ENCODE measurements at regions of chr2 and their contacts with region 1.

Region 1: DNA sequence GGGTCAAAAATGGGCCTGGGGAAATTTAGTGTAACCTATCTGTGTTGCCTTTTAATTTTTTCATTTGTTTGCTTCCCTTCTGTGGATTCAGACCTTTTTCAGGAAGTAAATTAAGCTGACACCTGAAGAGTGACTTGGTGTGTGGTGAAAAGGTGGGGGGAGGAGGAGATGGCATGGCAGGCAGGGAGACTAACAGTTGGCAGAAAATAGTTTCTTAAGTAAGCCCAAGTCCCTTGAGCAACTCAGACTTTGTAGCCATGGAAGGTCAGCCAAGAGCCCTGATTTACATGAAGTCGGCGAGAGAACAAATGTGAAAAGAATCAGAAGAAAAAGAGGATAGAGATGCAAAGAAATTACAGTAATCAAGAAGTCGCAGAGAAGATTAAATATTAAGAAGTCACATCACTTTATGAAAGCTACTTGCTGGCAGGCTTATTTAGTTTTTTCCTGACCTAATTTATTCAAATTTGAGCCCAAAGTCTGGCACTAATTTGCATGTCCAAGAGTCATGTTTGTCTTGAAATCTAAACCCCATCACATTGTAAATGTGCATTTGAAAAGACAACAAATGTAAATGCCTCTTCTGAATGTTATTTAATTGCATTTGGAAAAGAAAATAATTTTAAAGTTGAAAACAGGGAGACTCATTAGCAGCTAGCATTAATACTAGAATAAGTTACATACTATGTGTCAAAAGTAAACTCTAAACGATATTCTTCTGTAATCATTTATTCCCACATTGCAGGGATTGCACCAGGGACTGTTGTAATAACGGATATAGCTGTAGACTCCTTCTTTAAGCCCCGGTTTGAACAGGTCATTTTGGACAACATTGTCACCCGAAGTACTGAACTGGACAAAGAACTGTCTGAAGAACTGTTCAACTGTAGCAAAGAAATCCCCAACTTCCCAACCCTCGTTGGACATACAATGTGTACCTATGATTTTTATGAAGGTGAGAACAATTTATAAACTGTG is 19.3 kb downstream of the UPP2 start:
- DNase-seq: peak; percentile 33
- H3K4me3 Mint-ChIP-seq: no peak overlapping the region
- H3K27ac Mint-ChIP-seq: no peak overlapping the region
- H3K4me1 Mint-ChIP-seq: peaks cover 36% of the 10 kb centered on the region
- H3K27me3 Mint-ChIP-seq: no peaks in the 10 kb centered on the region
- CTCF ChIP-seq: no peak

Region 2: GRCh38 chr2:158094487-158095092 is 26.4 kb before region 1 on chr2:
- CTCF ChIA-PET with region 1: interaction called, 3 read pairs
- intact Hi-C with region 1: loop called (anchors 2 kb)
- DNase-seq: peak; percentile 46
- H3K4me3 Mint-ChIP-seq: peak overlapping the region; percentile 4
- H3K27ac Mint-ChIP-seq: peak overlapping the region; percentile 79
- H3K4me1 Mint-ChIP-seq: peaks cover 39% of the 10 kb centered on the region
- H3K27me3 Mint-ChIP-seq: no peaks in the 10 kb centered on the region
- CTCF ChIP-seq: no peak

Region 3: DNA sequence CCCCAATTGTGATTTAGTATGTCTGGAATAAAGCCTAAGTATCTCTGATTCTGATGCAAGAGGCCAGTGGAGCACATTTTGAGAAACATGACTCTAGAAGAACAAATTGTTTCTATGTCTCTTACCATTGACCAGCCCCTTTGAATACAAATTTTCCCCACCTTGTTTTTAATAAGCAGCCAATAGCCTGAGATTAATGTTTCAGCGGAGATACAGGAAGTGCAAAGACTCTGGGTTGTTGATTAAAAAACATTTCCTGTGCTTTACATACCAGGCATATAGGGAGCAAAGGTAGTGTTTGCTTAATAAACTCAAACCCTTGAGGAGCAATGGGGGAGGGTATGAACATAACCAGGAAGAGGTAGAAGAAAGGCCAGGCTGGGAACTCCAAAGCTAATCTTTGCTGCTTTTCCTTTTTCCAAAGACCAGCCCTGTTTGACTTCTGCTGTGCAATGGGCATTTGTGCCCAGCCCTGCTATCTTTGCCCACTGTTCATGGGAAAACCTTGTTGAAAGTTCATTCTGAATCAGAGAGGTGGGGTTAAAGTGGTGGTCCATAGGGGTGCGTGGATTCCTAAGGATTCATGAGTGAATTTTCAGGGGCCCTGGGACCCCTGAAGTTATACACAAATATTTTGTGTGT is 10.0 kb after region 1 on chr2:
- CTCF ChIA-PET with region 1: interaction called, 14 read pairs
- intact Hi-C with region 1: no loop called
- DNase-seq: peak; percentile 65
- H3K4me3 Mint-ChIP-seq: peak overlapping the region; percentile 38
- H3K27ac Mint-ChIP-seq: peak overlapping the region; percentile 93
- H3K4me1 Mint-ChIP-seq: peaks cover 79% of the 10 kb centered on the region
- H3K27me3 Mint-ChIP-seq: no peaks in the 10 kb centered on the region
- CTCF ChIP-seq: no peak

Measured in Calu3 (cell line).